Naive thymus-derived CD4-positive, alpha-beta T cell (primary cell): ENCODE measurements at regions of chr11 and their contacts with region 1.

Region 1: GRCh38 chr11:61639816-61640443 is 40.3 kb upstream of the DAGLA start:
- DNase-seq: no peak
- ATAC-seq: no peak
- H3K4me3 ChIP-seq: no peak overlapping the region
- H3K4me3 Mint-ChIP-seq: no peak overlapping the region
- H3K27ac ChIP-seq: no peak overlapping the region
- H3K27ac Mint-ChIP-seq: no peak overlapping the region
- H3K4me1 ChIP-seq: no peaks in the 10 kb centered on the region
- H3K4me1 Mint-ChIP-seq: no peaks in the 10 kb centered on the region
- H3K27me3 ChIP-seq: no peaks in the 10 kb centered on the region
- H3K27me3 Mint-ChIP-seq: peaks cover 0 to 7% (median 3%) of the 10 kb centered on the region in 5 donors

Region 2: GRCh38 chr11:61446211-61446651 is 193.7 kb before region 1 on chr11:
- CTCF ChIA-PET with region 1: interaction called, 5 read pairs
- POLR2A ChIA-PET with region 1: no interaction called
- intact Hi-C with region 1: loop called (anchors 1 kb)
- DNase-seq: peak; percentile 24 to 71 (median 53)
- ATAC-seq: peak; percentile 92
- H3K4me3 ChIP-seq: no peak overlapping the region
- H3K4me3 Mint-ChIP-seq: no peak overlapping the region
- H3K27ac ChIP-seq: no peak overlapping the region
- H3K27ac Mint-ChIP-seq: peak overlapping the region in 4 of 9 donors; percentile 21 to 38 (median 30)
- H3K4me1 ChIP-seq: no peaks in the 10 kb centered on the region
- H3K4me1 Mint-ChIP-seq: peaks cover 7 to 27% (median 17%) of the 10 kb centered on the region in 7 donors
- H3K27me3 ChIP-seq: no peaks in the 10 kb centered on the region
- H3K27me3 Mint-ChIP-seq: no peaks in the 10 kb centered on the region

Region 3: DNA sequence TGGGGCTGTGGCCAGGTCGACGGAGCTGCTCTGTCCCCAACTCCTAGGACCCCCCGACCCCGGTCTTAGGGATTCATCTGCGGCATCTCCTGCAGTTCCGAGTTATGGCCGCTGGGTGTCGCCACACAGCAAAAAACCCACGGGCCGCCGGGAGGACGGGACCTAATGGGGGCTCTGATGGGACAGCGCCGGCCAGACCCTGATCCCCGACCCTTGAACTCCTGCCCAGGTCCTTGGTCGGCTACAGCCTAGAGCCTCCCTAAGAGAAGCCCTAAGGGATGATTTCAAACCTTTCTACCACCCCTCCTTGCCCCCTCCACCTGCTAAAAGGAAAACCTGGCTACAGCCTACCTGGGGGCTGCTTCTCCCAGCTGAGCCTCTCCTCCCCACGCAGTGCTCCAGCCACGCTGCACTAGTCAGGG is 162.2 kb before region 1 on chr11:
- CTCF ChIA-PET with region 1: interaction called, 17 read pairs
- POLR2A ChIA-PET with region 1: no interaction called
- intact Hi-C with region 1: loop called in 1 of 2 experiments (anchors 1 kb)
- DNase-seq: peak in 8 of 9 donors; percentile 16 to 66 (median 44)
- ATAC-seq: peak; percentile 60
- H3K4me3 ChIP-seq: no peak overlapping the region
- H3K4me3 Mint-ChIP-seq: peak overlapping the region in 1 of 10 donors; percentile 1
- H3K27ac ChIP-seq: no peak overlapping the region
- H3K27ac Mint-ChIP-seq: no peak overlapping the region
- H3K4me1 ChIP-seq: peaks cover 5 to 6% of the 10 kb centered on the region in 2 donors
- H3K4me1 Mint-ChIP-seq: peaks cover 3 to 17% (median 8%) of the 10 kb centered on the region in 7 donors
- H3K27me3 ChIP-seq: no peaks in the 10 kb centered on the region
- H3K27me3 Mint-ChIP-seq: peaks cover 0 to 4% (median 0%) of the 10 kb centered on the region in 5 donors

Region 4: GRCh38 chr11:61679893-61680621 is 40.1 kb after region 1 on chr11 and contains the start of gene DAGLA:
- CTCF ChIA-PET with region 1: no interaction called
- POLR2A ChIA-PET with region 1: no interaction called
- intact Hi-C with region 1: no loop called
- DNase-seq: peak; percentile 60 to 91 (median 74)
- ATAC-seq: peak; percentile 89
- H3K4me3 ChIP-seq: no peak within 1 kb of the TSS
- H3K4me3 Mint-ChIP-seq: peak within 1 kb of the TSS in 9 of 10 donors; percentile 38 to 77 (median 67)
- H3K27ac ChIP-seq: no peak within 1 kb of the TSS
- H3K27ac Mint-ChIP-seq: peak within 1 kb of the TSS in 4 of 9 donors; percentile 43 to 65 (median 55)
- H3K4me1 ChIP-seq: peaks cover 14 to 16% of the 10 kb centered on the region in 2 donors
- H3K4me1 Mint-ChIP-seq: peaks cover 0 to 9% (median 5%) of the 10 kb centered on the region in 7 donors
- H3K27me3 ChIP-seq: peaks cover 0 to 3% of the 10 kb centered on the region in 2 donors
- H3K27me3 Mint-ChIP-seq: peaks cover 2 to 27% (median 21%) of the 10 kb centered on the region in 5 donors
- total RNA-seq, gene DAGLA: 0.15 to 2.1 (median 0.35) TPM

Region 5: GRCh38 chr11:61733120-61733978 is 93.4 kb after region 1 on chr11:
- CTCF ChIA-PET with region 1: interaction called, 4 read pairs
- POLR2A ChIA-PET with region 1: no interaction called
- intact Hi-C with region 1: loop called in 1 of 2 experiments (anchors 1 kb)
- DNase-seq: peak; percentile 69 to 85 (median 80)
- ATAC-seq: peak; percentile 98
- H3K4me3 ChIP-seq: no peak overlapping the region
- H3K4me3 Mint-ChIP-seq: no peak overlapping the region
- H3K27ac ChIP-seq: no peak overlapping the region
- H3K27ac Mint-ChIP-seq: peak overlapping the region in 7 of 9 donors; percentile 17 to 84 (median 46)
- H3K4me1 ChIP-seq: no peaks in the 10 kb centered on the region
- H3K4me1 Mint-ChIP-seq: peaks cover 5 to 8% (median 5%) of the 10 kb centered on the region in 7 donors
- H3K27me3 ChIP-seq: no peaks in the 10 kb centered on the region
- H3K27me3 Mint-ChIP-seq: peaks cover 0 to 4% (median 0%) of the 10 kb centered on the region in 5 donors